A549 (cell line): ENCODE measurements at regions of chr10 and their contacts with region 1.

Region 1: DNA sequence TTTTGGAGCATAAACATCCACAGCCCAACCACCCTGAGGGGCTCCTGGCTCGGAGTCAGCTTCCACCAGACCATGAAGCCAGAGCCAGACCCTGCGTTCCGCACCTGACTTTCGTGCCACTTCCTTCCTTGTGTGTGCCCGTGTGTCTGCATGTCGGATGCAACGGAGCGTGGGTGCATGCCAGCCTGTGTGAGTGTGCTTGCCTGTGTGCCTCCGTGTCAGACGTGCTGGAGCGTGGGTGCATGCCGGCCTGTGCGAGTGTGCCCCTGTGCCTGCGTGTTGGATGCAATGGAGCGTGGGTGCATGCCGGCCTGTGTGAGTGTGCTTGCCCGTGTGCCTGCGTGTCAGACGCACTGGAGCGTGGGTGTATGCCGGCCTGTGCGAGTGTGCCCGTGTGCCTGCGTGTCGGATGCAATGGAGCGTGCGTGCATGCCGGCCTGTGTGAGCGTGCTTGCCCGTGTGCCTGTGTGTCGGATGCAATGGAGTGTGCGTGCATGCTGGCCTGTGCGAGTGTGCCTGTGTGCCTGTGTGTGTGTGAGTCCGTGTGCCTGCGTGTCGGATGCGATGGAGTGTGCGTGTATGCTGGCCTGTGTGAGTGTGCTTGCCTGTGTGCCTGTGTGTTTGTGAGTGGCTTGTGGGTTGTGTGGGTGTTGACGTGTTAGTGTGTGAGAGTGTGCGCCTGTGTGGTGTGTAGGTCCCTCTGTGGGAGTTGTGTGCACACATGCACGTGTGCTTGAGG is 28.1 kb upstream of the KNDC1 start:
- DNase-seq: no peak
- ATAC-seq: no peak
- H3K4me3 ChIP-seq: no peak overlapping the region
- H3K27ac ChIP-seq: no peak overlapping the region
- H3K4me1 ChIP-seq: no peaks in the 10 kb centered on the region
- CTCF ChIP-seq: no peak
- EP300 ChIP-seq: no peak
- POLR2A ChIP-seq: no peak
- RAD21 ChIP-seq: no peak

Region 2: GRCh38 chr10:133143200-133143533 is 11.3 kb after region 1 on chr10:
- CTCF ChIA-PET with region 1: interaction called, 13 read pairs
- POLR2A ChIA-PET with region 1: no interaction called
- DNase-seq: no peak
- ATAC-seq: peak; percentile 36 to 41; a peak in 2 of 6 replicates
- H3K4me3 ChIP-seq: no peak overlapping the region
- H3K27ac ChIP-seq: no peak overlapping the region
- H3K4me1 ChIP-seq: peaks cover 14% of the 10 kb centered on the region; the same call in 2 of the 3 replicates
- CTCF ChIP-seq: no peak
- EP300 ChIP-seq: no peak
- POLR2A ChIP-seq: no peak
- RAD21 ChIP-seq: no peak

Region 3: GRCh38 chr10:133159950-133160819 is 28.3 kb after region 1 on chr10 and contains the start of gene KNDC1:
- CTCF ChIA-PET with region 1: no interaction called
- POLR2A ChIA-PET with region 1: no interaction called
- DNase-seq: peak in 1 of 2 experiments; percentile 80
- ATAC-seq: peak; percentile 71 to 73
- H3K4me3 ChIP-seq: peak within 1 kb of the TSS; percentile 88
- H3K27ac ChIP-seq: peak within 1 kb of the TSS; percentile 79 to 90
- H3K4me1 ChIP-seq: peaks cover 15% of the 10 kb centered on the region
- CTCF ChIP-seq: no peak
- EP300 ChIP-seq: no peak
- POLR2A ChIP-seq: no peak
- RAD21 ChIP-seq: no peak
- polyA plus RNA-seq, gene KNDC1: 0.63 and 0.65 TPM in 2 replicates